Calu3 (cell line): ENCODE measurements at regions of chr7 and their contacts with region 1.

Region 1: GRCh38 chr7:135801045-135801693 is 52.6 kb upstream of the FAM180A start:
- DNase-seq: peak; percentile 42
- H3K4me3 Mint-ChIP-seq: no peak overlapping the region
- H3K27ac Mint-ChIP-seq: no peak overlapping the region
- H3K4me1 Mint-ChIP-seq: peaks cover 20% of the 10 kb centered on the region
- H3K27me3 Mint-ChIP-seq: peaks cover 45% of the 10 kb centered on the region
- CTCF ChIP-seq: peak; percentile 51

Region 2: DNA sequence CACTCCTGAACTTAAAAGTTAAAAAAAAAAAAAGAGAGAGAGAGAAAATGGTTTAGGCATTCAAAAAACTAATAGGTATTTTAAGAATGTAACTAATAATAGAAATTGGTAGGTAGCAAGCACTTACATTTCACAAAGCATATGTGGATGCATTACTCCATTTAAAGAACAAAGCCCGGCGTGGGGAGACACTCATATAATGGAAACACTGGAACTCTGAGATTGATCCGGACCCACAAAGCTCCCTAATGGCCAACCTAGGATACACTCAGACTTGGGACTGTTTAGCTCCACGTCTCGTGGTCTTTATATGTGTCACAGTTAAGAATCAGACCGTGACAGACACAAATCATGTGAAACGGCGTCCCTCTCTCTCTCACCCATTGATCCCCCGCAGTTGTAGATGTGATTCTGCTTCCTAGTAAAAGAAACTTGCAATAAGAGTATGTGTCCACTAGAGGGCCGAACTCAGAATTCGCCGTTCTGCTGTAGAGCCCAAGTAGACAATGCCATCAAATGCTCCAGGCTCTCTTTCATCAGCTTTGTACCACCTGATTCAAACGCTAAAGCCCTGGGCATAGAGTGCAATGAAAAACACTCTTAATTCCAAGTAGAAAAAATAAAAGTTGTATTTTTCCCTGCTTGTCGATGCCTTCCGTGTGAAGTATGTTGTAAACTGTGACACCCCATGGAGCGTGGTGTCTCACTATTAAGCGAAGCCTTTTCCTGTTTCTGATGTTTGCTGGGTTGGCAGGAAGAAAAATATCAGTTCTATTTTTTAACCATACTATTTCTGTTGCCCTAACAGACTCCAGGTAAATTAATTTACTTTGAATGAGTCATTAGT is 605.0 kb after region 1 on chr7:
- CTCF ChIA-PET with region 1: no interaction called
- intact Hi-C with region 1: loop called (anchors 10 kb)
- DNase-seq: peak; percentile 46
- H3K4me3 Mint-ChIP-seq: peak overlapping the region; percentile 54
- H3K27ac Mint-ChIP-seq: no peak overlapping the region
- H3K4me1 Mint-ChIP-seq: peaks cover 13% of the 10 kb centered on the region
- H3K27me3 Mint-ChIP-seq: peaks cover 8% of the 10 kb centered on the region
- CTCF ChIP-seq: peak; percentile 66